Posterior vena cava (tissue), 2 donors: ENCODE measurements at regions of chr19 and their contacts with region 1.

Region 1: DNA sequence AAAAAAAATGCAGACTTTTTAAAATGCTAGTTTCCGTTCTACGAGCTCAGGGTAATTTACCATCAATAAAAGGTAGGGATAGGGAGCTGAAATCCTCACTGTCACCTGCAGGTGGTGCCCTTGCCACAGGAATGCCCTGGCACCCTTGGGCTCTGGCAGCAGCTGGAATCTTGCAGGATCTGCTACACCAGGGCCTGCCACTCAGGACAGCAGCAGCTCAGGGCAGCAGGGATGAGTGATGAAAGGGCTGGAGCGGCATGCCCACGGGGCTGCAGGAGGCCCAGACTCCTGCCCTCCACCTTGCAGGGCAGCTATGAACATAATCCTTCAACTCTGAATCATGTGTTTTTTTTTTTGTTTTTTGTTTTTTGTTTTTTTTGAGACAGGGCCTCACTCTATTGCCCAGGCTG is 54.0 kb downstream of the GNG7 start:
- DNase-seq: peak; percentile 92

Region 2: DNA sequence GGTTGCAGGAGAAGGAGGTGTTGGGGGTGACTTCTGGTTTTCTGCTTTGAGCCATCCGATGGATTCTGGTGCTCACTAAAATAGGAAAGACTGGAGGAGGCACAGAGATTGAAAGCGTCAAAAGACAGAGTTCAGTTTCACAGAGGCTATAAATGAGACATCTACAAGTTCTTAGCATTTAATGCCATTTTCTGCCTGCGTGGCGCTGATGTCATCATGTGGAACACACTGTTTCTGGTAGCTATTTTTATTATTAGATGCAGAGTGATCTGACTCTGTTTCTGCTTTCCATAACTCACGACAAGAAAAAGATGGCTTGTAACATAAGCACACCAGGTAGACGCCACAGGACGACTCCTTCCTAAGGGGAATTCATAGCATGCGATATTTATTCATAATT is 94.6 kb after region 1 on chr19:
- intact Hi-C with region 1: loop called (anchors 2 kb)
- DNase-seq: no peak

Region 3: DNA sequence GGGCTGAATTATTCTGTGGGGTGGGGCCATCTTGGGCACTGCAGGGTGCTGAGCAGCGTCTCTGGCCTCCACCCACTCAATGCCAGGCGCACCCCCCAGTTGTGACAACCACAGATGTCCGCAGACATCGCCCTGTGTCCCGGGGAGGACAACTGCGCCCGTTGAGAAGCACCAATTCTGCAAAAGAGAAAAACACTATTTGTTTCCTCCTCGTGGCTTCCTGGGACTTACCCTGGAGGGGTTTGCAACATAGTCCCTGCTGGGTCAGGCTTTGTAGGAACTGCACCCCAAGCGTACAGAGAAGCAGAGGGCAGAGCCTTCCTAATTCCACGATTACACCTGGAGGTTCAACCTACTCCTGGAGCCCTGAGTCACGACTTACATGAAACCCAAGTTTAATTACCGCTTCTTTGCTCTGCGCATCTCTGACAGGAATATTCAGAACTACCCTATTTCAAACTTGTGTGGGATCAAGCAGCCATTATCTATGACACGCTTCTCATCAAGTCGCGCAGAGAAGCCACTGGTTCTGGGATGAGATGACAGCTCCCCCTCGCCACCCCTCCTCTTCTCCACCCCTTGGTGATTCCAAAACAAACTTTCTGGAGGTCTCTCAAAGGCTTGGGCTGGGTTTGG is 102.4 kb after region 1 on chr19:
- intact Hi-C with region 1: loop called in 1 of 2 experiments (anchors 2 kb)
- DNase-seq: no peak